MCF 10A (cell line): ENCODE measurements at regions of chr2 and their contacts with region 1.

Region 1: GRCh38 chr2:148989882-148990493 is 48.5 kb upstream of the LYPD6B start:
- DNase-seq: peak; percentile 80
- H3K4me3 Mint-ChIP-seq: no peak overlapping the region
- H3K27ac Mint-ChIP-seq: no peak overlapping the region
- H3K4me1 Mint-ChIP-seq: no peaks in the 10 kb centered on the region
- H3K27me3 Mint-ChIP-seq: no peaks in the 10 kb centered on the region
- CTCF ChIP-seq: peak; percentile 83

Region 2: GRCh38 chr2:147937744-147938349 is 1052.1 kb before region 1 on chr2:
- CTCF ChIA-PET with region 1: interaction called, 13 read pairs
- POLR2A ChIA-PET with region 1: no interaction called
- intact Hi-C with region 1: loop called (anchors 1 kb)
- DNase-seq: peak; percentile 48
- H3K4me3 Mint-ChIP-seq: no peak overlapping the region
- H3K27ac Mint-ChIP-seq: no peak overlapping the region
- H3K4me1 Mint-ChIP-seq: no peaks in the 10 kb centered on the region
- H3K27me3 Mint-ChIP-seq: no peaks in the 10 kb centered on the region
- CTCF ChIP-seq: peak; percentile 75

Region 3: DNA sequence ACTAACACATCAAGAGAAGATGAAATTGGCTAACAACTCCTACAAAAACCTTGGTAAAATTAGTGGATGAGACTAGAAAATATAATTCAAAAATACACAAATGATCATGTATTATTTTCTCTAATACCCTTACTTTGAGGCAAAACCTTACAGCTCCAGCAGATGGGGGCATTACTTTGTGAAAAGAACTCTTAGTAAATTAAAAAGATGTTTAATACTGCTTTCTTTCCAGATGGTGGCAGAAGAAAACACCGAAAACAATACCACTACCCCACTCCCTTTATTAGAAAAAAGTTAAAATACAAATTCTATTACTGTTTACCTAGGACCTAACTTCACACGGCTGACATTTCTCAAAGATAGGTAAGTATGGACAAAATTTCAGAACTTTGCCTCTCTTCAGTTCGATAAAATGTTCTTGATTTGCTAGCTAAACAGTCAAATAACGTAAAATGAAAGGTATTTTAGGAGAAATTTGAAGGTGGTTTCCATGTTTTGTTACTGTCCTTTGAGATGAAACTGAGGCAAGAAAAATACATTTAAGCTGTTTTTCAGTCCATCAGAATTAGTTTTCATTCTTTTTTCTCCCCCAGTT is 1000.1 kb before region 1 on chr2:
- CTCF ChIA-PET with region 1: interaction called, 5 read pairs
- POLR2A ChIA-PET with region 1: no interaction called
- intact Hi-C with region 1: loop called (anchors 1 kb)
- DNase-seq: peak; percentile 50
- H3K4me3 Mint-ChIP-seq: no peak overlapping the region
- H3K27ac Mint-ChIP-seq: no peak overlapping the region
- H3K4me1 Mint-ChIP-seq: no peaks in the 10 kb centered on the region
- H3K27me3 Mint-ChIP-seq: no peaks in the 10 kb centered on the region
- CTCF ChIP-seq: peak; percentile 72

Region 4: GRCh38 chr2:148565272-148565894 is 424.6 kb before region 1 on chr2:
- CTCF ChIA-PET with region 1: interaction called, 3 read pairs
- POLR2A ChIA-PET with region 1: no interaction called
- intact Hi-C with region 1: loop called (anchors 1 kb)
- DNase-seq: peak; percentile 27
- H3K4me3 Mint-ChIP-seq: no peak overlapping the region
- H3K27ac Mint-ChIP-seq: no peak overlapping the region
- H3K4me1 Mint-ChIP-seq: no peaks in the 10 kb centered on the region
- H3K27me3 Mint-ChIP-seq: no peaks in the 10 kb centered on the region
- CTCF ChIP-seq: peak; percentile 14

Region 5: DNA sequence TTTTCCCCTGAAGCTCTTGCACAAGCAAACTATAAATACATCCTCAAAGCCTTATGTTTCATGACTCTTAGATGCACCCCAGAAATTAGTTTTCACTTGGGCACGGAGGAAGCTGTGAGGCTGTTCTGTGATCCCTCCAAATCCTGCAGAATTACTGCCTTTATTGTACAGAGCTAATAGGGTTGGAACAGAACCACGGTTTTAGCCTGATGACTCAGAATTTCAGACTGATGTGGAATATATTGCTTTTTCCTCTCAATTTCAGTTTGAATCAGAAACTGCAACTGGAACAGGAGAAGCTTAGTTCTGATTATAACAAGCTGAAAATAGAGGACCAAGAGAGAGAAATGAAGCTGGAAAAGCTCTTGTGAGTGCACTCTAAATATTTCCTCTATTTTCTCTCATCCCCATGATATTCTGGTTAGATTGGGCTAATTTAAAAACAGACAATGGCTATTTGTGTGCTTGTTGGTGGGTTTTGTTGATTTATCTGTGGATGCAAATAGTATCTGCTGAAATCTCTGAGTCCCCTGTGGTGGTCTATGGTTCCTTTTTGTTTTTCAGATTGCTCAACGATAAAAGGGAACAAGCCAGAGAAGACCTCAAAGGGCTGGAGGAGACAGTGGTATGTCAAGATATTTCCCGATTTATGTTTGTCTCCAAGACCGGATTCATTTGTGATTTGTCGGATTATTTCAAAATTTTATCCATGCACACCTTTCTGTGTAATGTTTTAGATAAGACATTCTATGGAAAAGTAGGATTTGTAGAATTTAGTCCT is 10.4 kb after region 1 on chr2:
- CTCF ChIA-PET with region 1: interaction called, 10 read pairs
- POLR2A ChIA-PET with region 1: interaction called, 3 read pairs
- intact Hi-C with region 1: no loop called
- DNase-seq: no peak
- H3K4me3 Mint-ChIP-seq: no peak overlapping the region
- H3K27ac Mint-ChIP-seq: no peak overlapping the region
- H3K4me1 Mint-ChIP-seq: no peaks in the 10 kb centered on the region
- H3K27me3 Mint-ChIP-seq: peaks cover 51% of the 10 kb centered on the region
- CTCF ChIP-seq: no peak